ENCODE measurements at regions of chr18 and their contacts with region 1.

Region 1: DNA sequence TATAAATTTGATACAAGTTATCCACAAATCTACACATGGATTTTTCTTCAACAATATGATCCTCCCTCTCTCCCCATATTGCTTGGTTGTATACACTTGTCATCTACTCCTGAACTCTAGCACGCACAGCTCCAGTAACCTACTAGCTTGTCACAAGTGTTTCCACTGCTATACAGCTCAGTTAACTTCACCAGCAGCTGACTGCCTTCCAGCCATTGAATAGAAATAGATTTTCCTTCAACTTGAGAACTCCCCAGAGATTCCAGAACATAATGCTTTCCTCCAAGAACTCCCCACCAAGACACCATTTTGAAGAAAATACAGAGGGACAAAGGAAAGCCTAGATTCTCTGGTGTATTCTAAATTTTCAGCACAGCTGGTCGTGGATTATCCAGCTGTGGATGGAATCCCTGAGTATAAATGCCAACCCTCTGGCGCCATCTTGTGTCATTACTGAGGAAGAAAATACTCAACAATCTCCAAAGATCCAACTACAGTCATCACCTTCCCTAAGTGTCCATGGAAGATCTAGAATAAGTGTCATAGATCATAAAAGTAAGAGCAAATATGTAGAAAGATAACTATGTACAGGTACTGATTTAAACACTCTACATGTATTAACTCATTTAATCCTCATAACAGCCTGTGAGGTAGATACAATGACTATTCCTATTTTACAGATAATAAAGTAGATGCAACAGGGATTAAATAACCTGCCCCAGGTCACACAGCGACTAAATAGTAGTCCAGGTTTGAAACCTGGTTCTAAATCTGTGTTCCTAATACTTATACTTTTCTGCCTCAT is 156.7 kb downstream of the ARHGAP28 start:
- DNase-seq: no peak
- ATAC-seq: peak; percentile 62
- H3K4me3 ChIP-seq: no peak overlapping the region
- H3K27ac ChIP-seq: no peak overlapping the region
- H3K4me1 ChIP-seq: no peaks in the 10 kb centered on the region
- H3K27me3 ChIP-seq: no peaks in the 10 kb centered on the region
- CTCF ChIP-seq: peak; percentile 50 to 62 (median 55)
- EP300 ChIP-seq: no peak
- POLR2A ChIP-seq: no peak
- RAD21 ChIP-seq: peak; percentile 78

Region 2: GRCh38 chr18:5868218-5869115 is 1017.7 kb before region 1 on chr18:
- CTCF ChIA-PET with region 1: interaction called, 4 read pairs
- POLR2A ChIA-PET with region 1: no interaction called
- RAD21 ChIA-PET with region 1: interaction called, 3 read pairs
- SMC1A ChIA-PET with region 1: no interaction called
- in situ Hi-C with region 1: loop called (anchors 10 kb)
- intact Hi-C with region 1: loop called (anchors 5 kb)
- DNase-seq: peak; percentile 16
- ATAC-seq: peak; percentile 93
- H3K4me3 ChIP-seq: no peak overlapping the region
- H3K27ac ChIP-seq: no peak overlapping the region
- H3K4me1 ChIP-seq: no peaks in the 10 kb centered on the region
- H3K27me3 ChIP-seq: no peaks in the 10 kb centered on the region
- CTCF ChIP-seq: peak; percentile 69 to 87 (median 79)
- EP300 ChIP-seq: no peak
- POLR2A ChIP-seq: no peak
- RAD21 ChIP-seq: peak; percentile 97

Region 3: GRCh38 chr18:6537475-6537874 is 348.7 kb before region 1 on chr18:
- CTCF ChIA-PET with region 1: interaction called, 46 read pairs
- POLR2A ChIA-PET with region 1: no interaction called
- RAD21 ChIA-PET with region 1: interaction called, 15 read pairs
- SMC1A ChIA-PET with region 1: interaction called, 7 read pairs
- in situ Hi-C with region 1: loop called (anchors 10 kb)
- intact Hi-C with region 1: no loop called
- DNase-seq: no peak
- ATAC-seq: peak; percentile 61
- H3K4me3 ChIP-seq: no peak overlapping the region
- H3K27ac ChIP-seq: no peak overlapping the region
- H3K4me1 ChIP-seq: no peaks in the 10 kb centered on the region
- H3K27me3 ChIP-seq: no peaks in the 10 kb centered on the region
- CTCF ChIP-seq: no peak
- EP300 ChIP-seq: no peak
- POLR2A ChIP-seq: no peak
- RAD21 ChIP-seq: no peak

Region 4: DNA sequence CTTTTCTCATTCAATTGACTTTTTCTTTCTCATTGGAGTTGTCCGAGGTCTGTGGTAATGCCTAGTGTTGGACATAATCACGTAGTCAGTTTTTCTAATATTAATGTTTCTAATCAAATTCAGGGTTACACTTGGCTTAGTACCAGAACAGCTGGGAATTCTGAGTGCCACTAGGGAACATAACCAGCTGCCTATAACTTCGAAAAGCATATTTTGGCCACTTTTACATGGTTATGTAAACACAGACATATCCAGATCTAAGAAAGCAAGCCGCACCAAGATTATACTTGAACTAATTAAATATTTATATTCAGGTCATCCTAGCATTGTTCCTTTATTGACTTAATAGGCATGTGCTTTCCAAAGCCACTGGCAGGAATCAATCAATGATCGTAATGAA is 247.7 kb before region 1 on chr18:
- CTCF ChIA-PET with region 1: no interaction called
- POLR2A ChIA-PET with region 1: no interaction called
- RAD21 ChIA-PET with region 1: no interaction called
- SMC1A ChIA-PET with region 1: no interaction called
- in situ Hi-C with region 1: no loop called
- intact Hi-C with region 1: no loop called
- DNase-seq: no peak
- ATAC-seq: no peak
- H3K4me3 ChIP-seq: no peak overlapping the region
- H3K27ac ChIP-seq: no peak overlapping the region
- H3K4me1 ChIP-seq: no peaks in the 10 kb centered on the region
- H3K27me3 ChIP-seq: no peaks in the 10 kb centered on the region
- CTCF ChIP-seq: no peak
- EP300 ChIP-seq: no peak
- POLR2A ChIP-seq: no peak
- RAD21 ChIP-seq: no peak

Region 5: GRCh38 chr18:6795307-6795706 is 90.9 kb before region 1 on chr18:
- CTCF ChIA-PET with region 1: no interaction called
- POLR2A ChIA-PET with region 1: no interaction called
- RAD21 ChIA-PET with region 1: no interaction called
- SMC1A ChIA-PET with region 1: no interaction called
- in situ Hi-C with region 1: no loop called
- intact Hi-C with region 1: no loop called
- DNase-seq: no peak
- ATAC-seq: no peak
- H3K4me3 ChIP-seq: no peak overlapping the region
- H3K27ac ChIP-seq: no peak overlapping the region
- H3K4me1 ChIP-seq: no peaks in the 10 kb centered on the region
- H3K27me3 ChIP-seq: no peaks in the 10 kb centered on the region
- CTCF ChIP-seq: no peak
- EP300 ChIP-seq: no peak
- POLR2A ChIP-seq: no peak
- RAD21 ChIP-seq: no peak

Measured in GM12878 (cell line).